ENCODE measurements at regions of chr3 and their contacts with region 1.

Region 1: DNA sequence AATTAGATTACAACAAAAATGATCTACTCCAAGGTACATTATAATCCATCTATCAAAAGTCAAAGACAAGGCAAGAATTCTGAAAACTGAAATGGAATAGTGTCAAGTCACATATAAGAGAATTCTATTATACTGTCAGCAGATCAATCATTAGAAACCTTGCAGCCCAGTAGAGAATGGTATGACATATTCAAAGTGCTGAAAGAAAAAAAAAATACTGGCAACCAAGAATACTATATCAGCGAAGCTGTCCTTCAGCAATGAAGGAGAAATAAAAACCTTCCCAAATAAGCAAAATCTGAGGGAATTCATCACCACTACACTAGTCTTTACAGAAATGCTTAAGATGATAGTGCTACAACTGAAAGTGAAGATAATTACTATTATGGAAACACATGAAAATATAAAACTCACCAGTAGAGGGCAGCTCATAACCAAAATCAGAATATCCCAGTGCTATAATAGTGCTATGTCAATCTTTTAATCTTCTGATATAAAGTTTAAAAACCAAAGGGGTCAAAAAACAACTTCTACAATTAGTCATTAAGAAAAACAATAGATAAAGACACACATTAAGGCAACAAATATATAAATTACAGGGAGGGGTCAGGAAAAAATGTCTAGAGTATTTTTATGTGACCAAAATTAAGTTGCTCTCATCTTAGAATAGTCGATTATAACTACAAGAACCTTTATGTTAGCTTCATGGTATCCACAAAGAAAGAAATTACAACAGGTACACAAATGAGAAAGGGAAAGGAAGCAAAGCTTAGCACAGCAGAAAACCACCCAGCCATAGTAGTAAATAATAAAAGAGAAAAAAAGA is 190.7 kb upstream of the CNTN6 start:
- DNase-seq: no peak
- H3K4me3 Mint-ChIP-seq: no peak overlapping the region
- H3K27ac Mint-ChIP-seq: no peak overlapping the region
- H3K4me1 Mint-ChIP-seq: no peaks in the 10 kb centered on the region
- H3K27me3 Mint-ChIP-seq: no peaks in the 10 kb centered on the region

Region 2: GRCh38 chr3:880371-880770 is 21.8 kb before region 1 on chr3:
- CTCF ChIA-PET with region 1: no interaction called
- intact Hi-C with region 1: no loop called
- DNase-seq: no peak
- H3K4me3 Mint-ChIP-seq: no peak overlapping the region
- H3K27ac Mint-ChIP-seq: no peak overlapping the region
- H3K4me1 Mint-ChIP-seq: no peaks in the 10 kb centered on the region
- H3K27me3 Mint-ChIP-seq: no peaks in the 10 kb centered on the region

Region 3: GRCh38 chr3:2156244-2156847 is 1254.2 kb after region 1 on chr3:
- CTCF ChIA-PET with region 1: no interaction called
- intact Hi-C with region 1: loop called (anchors 10 kb)
- DNase-seq: peak; percentile 8
- H3K4me3 Mint-ChIP-seq: no peak overlapping the region
- H3K27ac Mint-ChIP-seq: no peak overlapping the region
- H3K4me1 Mint-ChIP-seq: no peaks in the 10 kb centered on the region
- H3K27me3 Mint-ChIP-seq: peaks cover 3% of the 10 kb centered on the region

Region 4: GRCh38 chr3:2713923-2714322 is 1811.8 kb after region 1 on chr3:
- CTCF ChIA-PET with region 1: no interaction called
- intact Hi-C with region 1: loop called (anchors 5 kb)
- DNase-seq: peak; percentile 6
- H3K4me3 Mint-ChIP-seq: no peak overlapping the region
- H3K27ac Mint-ChIP-seq: no peak overlapping the region
- H3K4me1 Mint-ChIP-seq: no peaks in the 10 kb centered on the region
- H3K27me3 Mint-ChIP-seq: no peaks in the 10 kb centered on the region